ENCODE measurements at regions of chr11 and their contacts with region 1.

Region 1: DNA sequence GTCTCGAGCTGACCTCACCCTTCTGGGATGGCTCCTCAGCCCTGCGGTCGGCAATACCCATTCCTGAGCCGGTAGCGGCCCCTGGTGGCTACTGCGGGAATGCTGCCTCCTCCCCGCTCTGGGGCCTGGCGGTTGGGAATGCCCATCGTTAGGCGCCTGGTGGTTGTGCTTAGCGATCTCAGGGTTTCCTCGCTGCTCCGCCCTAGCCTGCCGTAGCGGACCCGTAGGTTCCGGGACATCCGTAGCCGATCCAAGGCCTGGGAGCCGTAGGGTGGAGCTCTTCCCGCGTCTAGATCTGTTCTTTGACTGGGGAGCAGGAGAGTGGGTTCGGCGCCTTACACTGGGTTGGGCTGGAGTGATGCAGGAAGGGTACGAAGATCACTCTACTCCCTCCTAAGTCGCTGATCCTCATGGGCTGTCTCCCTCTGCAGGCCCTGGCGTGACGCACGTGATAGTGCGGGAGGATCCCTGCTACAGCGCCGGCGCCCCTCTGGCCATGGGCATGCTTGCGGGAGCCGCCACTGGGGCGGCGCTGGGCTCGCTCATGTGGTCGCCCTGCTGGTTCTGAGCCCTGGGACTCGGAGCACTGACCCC is 14.8 kb downstream of the PLEKHB1 start:
- H3K4me3 ChIP-seq: no peak overlapping the region; the same call in 1 of the 2 replicates
- H3K27ac ChIP-seq: no peak overlapping the region
- H3K4me1 ChIP-seq: no peaks in the 10 kb centered on the region
- CTCF ChIP-seq: peak; percentile 91

Region 2: GRCh38 chr11:73295231-73295995 is 365.7 kb before region 1 on chr11:
- CTCF ChIA-PET with region 1: interaction called, 10 read pairs
- POLR2A ChIA-PET with region 1: no interaction called
- H3K4me3 ChIP-seq: no peak overlapping the region
- H3K27ac ChIP-seq: no peak overlapping the region
- H3K4me1 ChIP-seq: no peaks in the 10 kb centered on the region
- CTCF ChIP-seq: no peak

Region 3: DNA sequence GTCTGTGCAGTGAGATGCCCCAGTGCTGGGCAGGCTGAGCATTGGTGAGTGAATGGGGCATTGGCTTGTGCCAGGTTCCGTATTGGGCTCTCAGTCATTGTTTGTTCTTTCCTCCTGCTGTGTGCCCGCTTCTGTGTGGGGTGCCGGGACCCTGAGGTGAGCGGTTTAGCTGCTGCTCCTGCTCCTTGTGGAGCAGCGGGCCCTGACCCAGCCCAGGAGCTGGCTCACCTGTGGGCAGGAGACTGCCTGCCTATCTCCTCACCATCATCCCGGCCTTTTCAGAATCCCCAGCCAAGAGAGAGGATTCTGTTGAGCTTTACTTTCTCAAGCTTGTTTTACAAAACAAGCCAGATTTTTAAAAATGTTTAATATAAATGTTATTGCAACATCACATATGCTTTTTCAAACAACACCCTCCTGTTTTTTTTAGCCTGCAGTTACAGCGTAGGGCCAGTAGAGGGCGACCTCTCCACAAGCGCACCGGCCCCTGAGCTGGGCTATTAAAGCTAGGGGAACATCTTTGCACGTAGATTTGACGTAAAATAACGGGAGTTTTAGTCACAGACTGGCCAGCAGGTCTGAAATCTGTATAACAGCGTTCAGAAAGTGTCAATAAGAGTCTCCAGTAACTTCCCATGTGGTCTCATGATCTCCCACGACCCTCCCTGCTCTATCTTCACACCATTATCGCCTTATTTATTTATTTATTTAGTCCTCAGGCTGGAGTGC is 310.1 kb before region 1 on chr11:
- CTCF ChIA-PET with region 1: interaction called, 64 read pairs
- POLR2A ChIA-PET with region 1: interaction called, 3 read pairs
- H3K4me3 ChIP-seq: no peak overlapping the region
- H3K27ac ChIP-seq: no peak overlapping the region
- H3K4me1 ChIP-seq: no peaks in the 10 kb centered on the region
- CTCF ChIP-seq: peak; percentile 60

Region 4: GRCh38 chr11:73404048-73404447 is 257.1 kb before region 1 on chr11:
- CTCF ChIA-PET with region 1: interaction called, 122 read pairs
- POLR2A ChIA-PET with region 1: interaction called, 4 read pairs
- H3K4me3 ChIP-seq: no peak overlapping the region
- H3K27ac ChIP-seq: no peak overlapping the region
- H3K4me1 ChIP-seq: no peaks in the 10 kb centered on the region
- CTCF ChIP-seq: peak; percentile 49; the same call in 1 of the 2 replicates

Region 5: DNA sequence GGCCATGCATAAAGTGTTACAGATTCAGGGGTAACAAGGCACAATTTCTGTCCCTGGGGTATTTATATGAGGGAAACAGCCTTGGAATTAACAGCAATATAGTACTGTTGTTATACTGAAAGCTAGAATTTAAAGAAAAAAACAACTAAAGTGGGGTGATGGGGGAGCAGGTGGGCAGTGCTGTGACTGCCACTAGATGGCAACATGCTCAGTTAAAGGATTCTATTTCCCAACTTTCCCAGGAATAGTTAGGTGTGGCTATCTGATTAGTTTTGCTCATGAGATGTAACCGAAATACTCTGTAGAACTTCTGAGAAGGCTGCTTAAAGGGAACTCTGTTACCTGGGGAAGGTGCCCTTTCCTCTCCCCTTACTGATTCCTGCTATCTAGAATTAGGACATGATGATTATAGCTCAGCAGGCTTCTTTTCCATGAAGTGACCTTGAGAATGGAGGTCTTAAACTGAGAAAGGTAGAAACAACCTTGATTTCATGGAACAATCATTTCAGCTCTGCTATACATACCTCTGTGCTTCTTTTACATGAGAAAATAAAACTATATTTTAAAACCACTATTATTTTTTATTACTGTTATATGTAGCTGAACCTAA is 182.3 kb before region 1 on chr11:
- CTCF ChIA-PET with region 1: interaction called, 47 read pairs
- POLR2A ChIA-PET with region 1: no interaction called
- H3K4me3 ChIP-seq: no peak overlapping the region
- H3K27ac ChIP-seq: no peak overlapping the region
- H3K4me1 ChIP-seq: peaks cover 7% of the 10 kb centered on the region; the same call in 1 of the 2 replicates
- CTCF ChIP-seq: 0 out of 2 replicates have a peak, but pooled peaks have one; percentile 12

Region 6: DNA sequence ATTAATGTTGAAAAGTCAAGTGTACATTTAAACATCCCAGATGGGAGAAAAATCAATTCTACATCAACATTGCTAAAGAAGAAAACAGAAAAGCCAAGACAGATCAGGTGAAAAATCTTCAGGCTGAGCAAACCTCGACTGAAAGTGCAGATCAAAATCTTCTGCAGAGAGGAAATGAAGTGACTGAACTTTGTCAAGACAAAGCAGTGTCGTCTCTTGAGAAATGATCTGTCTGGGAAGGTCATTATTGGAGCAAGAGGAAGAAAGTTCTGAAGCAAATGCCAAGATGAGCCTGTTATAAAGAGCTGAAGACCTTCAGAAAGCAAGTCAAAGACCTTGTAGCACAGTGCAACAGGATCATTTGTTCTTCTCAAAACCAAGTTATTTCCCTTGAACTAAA is 20.5 kb before region 1 on chr11:
- CTCF ChIA-PET with region 1: interaction called, 10 read pairs
- POLR2A ChIA-PET with region 1: no interaction called
- H3K4me3 ChIP-seq: no peak overlapping the region
- H3K27ac ChIP-seq: no peak overlapping the region
- H3K4me1 ChIP-seq: no peaks in the 10 kb centered on the region
- CTCF ChIP-seq: no peak

Region 7: DNA sequence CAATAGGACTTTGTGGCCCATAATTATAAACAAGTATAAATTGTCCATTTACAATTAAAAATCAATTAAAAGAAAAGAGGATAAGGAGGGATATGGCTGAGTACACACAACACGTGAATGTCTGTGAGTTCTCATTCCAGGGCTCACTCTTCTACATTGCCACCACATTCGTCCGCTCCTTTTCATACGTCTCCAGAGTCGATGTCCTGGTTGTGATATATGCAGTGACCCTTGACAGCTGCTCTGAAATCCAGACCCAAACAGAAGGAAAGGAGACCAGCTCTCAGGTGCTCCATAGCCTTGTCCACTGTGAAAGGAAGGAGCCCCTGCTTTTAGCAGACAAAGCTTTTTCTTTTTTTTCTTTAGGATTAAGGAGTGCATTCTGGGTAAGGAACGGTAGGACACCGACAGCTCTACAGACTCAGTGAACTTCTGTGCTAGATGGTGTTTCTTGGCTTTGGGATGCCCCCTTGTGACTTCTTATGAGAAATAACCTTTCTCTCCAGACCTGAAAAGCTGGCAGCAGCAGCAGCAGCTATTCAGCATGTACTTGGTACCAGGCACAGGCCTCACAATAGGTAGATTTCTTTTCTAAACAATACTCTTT is 270.0 kb after region 1 on chr11:
- CTCF ChIA-PET with region 1: interaction called, 18 read pairs
- POLR2A ChIA-PET with region 1: no interaction called
- H3K4me3 ChIP-seq: no peak overlapping the region
- H3K27ac ChIP-seq: no peak overlapping the region
- H3K4me1 ChIP-seq: no peaks in the 10 kb centered on the region
- CTCF ChIP-seq: no peak

Region 8: DNA sequence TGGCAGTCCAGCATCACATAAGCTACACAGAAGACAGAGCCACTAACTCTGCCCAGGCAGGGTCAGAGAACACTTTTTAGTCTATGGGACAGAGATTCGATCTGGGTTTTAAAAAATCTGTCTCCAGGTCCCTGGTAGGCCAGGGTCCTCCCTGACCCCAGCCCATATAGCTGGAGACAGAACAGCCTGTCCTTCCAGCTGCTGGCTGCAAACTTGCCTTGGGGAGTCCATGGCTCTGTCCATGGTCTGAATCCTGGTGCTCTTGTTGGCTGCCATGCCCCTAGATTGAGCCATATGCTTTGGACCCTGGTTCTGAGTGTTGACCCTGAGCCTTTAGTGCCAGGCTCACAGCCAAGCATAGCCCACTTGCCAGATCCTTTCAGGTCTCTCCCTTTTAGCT is 845.7 kb after region 1 on chr11:
- CTCF ChIA-PET with region 1: no interaction called
- POLR2A ChIA-PET with region 1: no interaction called
- H3K4me3 ChIP-seq: no peak overlapping the region
- H3K27ac ChIP-seq: no peak overlapping the region
- H3K4me1 ChIP-seq: no peaks in the 10 kb centered on the region
- CTCF ChIP-seq: no peak

Measured in HEK293 (cell line).